Activated CD4-positive, alpha-beta memory T cell treated with anti-CD3 and anti-CD28 coated beads for 36 hours (primary cell): ENCODE measurements at regions of chr18 and their contacts with region 1.

Region 1: DNA sequence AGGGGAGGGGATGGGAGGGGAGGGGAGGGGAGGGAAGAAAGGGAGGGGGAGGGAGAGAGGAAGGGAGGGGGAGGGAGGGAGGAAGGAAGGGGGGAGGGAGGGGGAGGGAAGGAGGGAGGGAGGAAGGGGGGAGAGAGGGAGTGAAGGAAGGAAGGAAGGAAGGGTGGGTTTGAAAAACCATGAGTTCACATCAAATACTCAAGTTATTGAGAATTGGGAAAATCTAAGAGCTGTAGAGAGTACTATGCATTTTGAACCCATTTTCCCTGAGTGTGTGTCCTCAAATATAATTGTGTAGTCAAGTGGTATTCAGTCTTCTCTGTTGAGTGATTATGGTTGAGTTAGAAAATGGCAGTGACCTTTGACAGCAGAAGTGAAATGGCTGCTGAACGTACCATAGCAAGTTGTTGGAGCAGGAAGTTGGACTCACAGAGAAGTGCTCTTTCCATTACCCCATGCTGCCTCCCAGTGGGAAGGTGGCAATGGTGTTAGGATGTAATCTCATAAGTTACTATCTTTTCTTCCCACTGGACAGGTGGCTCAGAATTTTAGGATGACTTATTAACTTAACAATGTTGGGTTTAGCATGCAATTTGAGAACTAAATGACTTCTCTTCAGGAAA is 214.6 kb downstream of the SETBP1 start:
- DNase-seq: peak; percentile 62
- H3K4me3 Mint-ChIP-seq: no peak overlapping the region
- H3K27ac Mint-ChIP-seq: no peak overlapping the region
- H3K4me1 Mint-ChIP-seq: peaks cover 43% of the 10 kb centered on the region
- H3K27me3 Mint-ChIP-seq: no peaks in the 10 kb centered on the region

Region 2: GRCh38 chr18:44799907-44800421 is 95.3 kb before region 1 on chr18:
- CTCF ChIA-PET with region 1: no interaction called
- POLR2A ChIA-PET with region 1: no interaction called
- intact Hi-C with region 1: loop called (anchors 2 kb)
- DNase-seq: no peak
- H3K4me3 Mint-ChIP-seq: no peak overlapping the region
- H3K27ac Mint-ChIP-seq: no peak overlapping the region
- H3K4me1 Mint-ChIP-seq: peaks cover 43% of the 10 kb centered on the region
- H3K27me3 Mint-ChIP-seq: peaks cover 3% of the 10 kb centered on the region